A549 (cell line): ENCODE measurements at regions of chr2 and their contacts with region 1.

Region 1: DNA sequence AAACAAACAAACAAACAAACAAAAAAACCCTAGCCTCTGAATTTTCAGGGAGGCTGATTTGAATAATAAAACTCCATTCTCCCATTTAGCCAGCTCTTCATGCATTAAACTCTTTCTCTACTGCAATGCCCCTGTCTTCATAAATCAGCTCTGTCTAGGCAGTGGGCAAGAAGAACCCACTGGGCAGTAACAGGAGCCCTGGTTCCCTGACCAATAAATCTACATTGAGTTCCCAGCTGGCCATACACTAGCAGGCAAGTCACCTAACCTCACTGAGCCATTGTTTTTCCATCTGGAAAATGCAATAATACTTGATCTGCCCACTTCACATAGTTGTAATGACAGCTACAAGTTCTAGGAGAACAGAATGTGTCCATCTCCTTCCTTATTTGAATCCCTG is 57.6 kb upstream of the YPEL5 start:
- DNase-seq: no peak
- ATAC-seq: no peak
- H3K4me3 ChIP-seq: no peak overlapping the region
- H3K27ac ChIP-seq: no peak overlapping the region
- H3K4me1 ChIP-seq: no peaks in the 10 kb centered on the region
- CTCF ChIP-seq: no peak
- EP300 ChIP-seq: no peak
- POLR2A ChIP-seq: no peak
- RAD21 ChIP-seq: no peak

Region 2: GRCh38 chr2:30072250-30072842 is 16.8 kb before region 1 on chr2:
- CTCF ChIA-PET with region 1: interaction called, 33 read pairs
- POLR2A ChIA-PET with region 1: no interaction called
- DNase-seq: peak; percentile 58 to 74
- ATAC-seq: peak; percentile 97 to 99
- H3K4me3 ChIP-seq: no peak overlapping the region
- H3K27ac ChIP-seq: no peak overlapping the region
- H3K4me1 ChIP-seq: no peaks in the 10 kb centered on the region
- CTCF ChIP-seq: peak; percentile 73
- EP300 ChIP-seq: no peak
- POLR2A ChIP-seq: no peak
- RAD21 ChIP-seq: peak; percentile 78 to 86

Region 3: GRCh38 chr2:30106543-30106942 is 17.4 kb after region 1 on chr2:
- CTCF ChIA-PET with region 1: interaction called, 108 read pairs
- POLR2A ChIA-PET with region 1: no interaction called
- DNase-seq: peak in 1 of 2 experiments; percentile 13
- ATAC-seq: no peak
- H3K4me3 ChIP-seq: no peak overlapping the region
- H3K27ac ChIP-seq: no peak overlapping the region
- H3K4me1 ChIP-seq: no peaks in the 10 kb centered on the region
- CTCF ChIP-seq: no peak
- EP300 ChIP-seq: no peak
- POLR2A ChIP-seq: no peak
- RAD21 ChIP-seq: no peak